Activated T-helper 2 cell treated with anti-CD3 and anti-CD28 coated beads, Interferon-gamma antibody, Interleukin-2, Interleukin-4, amounts not matched to agents 10 μg/mL and 5 μg/mL and 100 μg/mL, durations not matched to agents 14 hours and 24 hours and 36 hours (primary cell): ENCODE measurements at regions of chr22 and their contacts with region 1.

Region 1: DNA sequence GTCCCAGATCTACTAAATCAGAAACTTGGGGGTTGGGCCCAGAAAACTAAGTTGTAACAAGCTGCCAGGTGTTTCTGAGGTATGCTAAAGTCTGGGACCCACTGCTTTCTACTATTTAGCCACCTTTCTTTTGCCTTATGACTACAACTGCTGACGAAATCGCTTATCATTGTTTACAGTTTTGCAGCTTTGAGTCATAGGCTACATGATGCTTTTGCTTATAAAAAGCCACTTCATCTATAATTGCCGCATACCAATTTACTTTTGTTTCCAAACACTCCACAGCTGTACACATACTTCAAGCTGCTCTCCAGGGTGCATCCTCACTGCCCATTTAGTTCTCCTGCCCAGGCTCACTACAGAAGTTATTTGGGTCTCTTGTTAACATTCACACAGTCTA is 144.7 kb downstream of the ENTHD1 start:
- DNase-seq: no peak
- H3K4me3 Mint-ChIP-seq: no peak overlapping the region
- H3K27ac Mint-ChIP-seq: no peak overlapping the region
- H3K4me1 Mint-ChIP-seq: peaks cover 45% of the 10 kb centered on the region
- H3K27me3 Mint-ChIP-seq: peaks cover 12% of the 10 kb centered on the region

Region 2: GRCh38 chr22:39773976-39774539 is 25.2 kb after region 1 on chr22:
- intact Hi-C with region 1: loop called (anchors 2 kb)
- DNase-seq: peak; percentile 61
- H3K4me3 Mint-ChIP-seq: peak overlapping the region; percentile 18
- H3K27ac Mint-ChIP-seq: peak overlapping the region; percentile 46
- H3K4me1 Mint-ChIP-seq: peaks cover 56% of the 10 kb centered on the region
- H3K27me3 Mint-ChIP-seq: no peaks in the 10 kb centered on the region

Region 3: DNA sequence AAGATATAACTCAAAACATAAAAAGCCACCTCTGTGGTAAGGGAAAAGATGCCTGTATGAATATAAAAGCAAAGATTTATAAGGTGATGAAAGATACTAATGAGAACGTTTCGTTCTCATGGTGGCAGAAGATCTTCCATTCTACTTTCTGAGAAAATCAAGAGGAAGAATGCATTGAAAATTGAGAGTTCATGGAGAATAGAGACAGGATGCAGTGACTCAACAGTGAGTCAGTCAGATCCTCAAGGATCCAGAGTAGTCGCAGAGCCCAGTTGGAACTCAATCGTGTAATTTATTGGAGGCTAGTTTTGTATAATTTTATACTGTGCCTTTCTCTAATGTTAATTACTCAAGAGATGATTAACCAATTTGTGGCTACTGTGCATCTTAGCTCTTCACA is 71.4 kb after region 1 on chr22:
- intact Hi-C with region 1: loop called (anchors 10 kb)
- DNase-seq: no peak
- H3K4me3 Mint-ChIP-seq: no peak overlapping the region
- H3K27ac Mint-ChIP-seq: no peak overlapping the region
- H3K4me1 Mint-ChIP-seq: peaks cover 5% of the 10 kb centered on the region
- H3K27me3 Mint-ChIP-seq: peaks cover 58% of the 10 kb centered on the region

Region 4: DNA sequence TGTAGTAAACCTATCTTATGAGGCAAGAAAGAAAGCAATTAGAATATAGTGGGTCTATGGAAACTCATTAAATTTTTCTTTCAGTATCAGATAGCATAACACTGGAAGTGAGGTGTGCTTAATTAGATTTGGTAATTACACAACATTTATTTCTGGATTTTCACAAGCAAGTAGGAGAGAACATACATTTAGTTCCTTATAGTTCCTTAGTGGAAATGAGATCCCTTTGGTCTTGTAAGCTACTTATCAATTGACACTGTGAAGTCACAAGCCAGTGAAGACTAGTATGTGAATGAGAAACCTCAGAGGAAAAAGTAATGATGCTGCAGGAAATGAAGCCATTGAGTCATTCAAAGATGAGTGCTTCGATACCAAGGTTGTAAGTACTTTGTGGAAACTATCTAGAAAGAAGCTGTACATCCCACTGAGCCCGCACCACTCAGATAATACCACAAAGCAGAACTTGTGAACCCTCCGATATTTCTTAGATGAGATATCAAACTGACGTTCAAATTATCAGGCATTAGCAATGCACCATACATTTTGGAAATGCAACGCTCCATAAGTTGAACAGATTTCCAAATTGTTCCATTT is 91.1 kb after region 1 on chr22:
- intact Hi-C with region 1: loop called (anchors 5 kb)
- DNase-seq: peak; percentile 47
- H3K4me3 Mint-ChIP-seq: peak overlapping the region; percentile 6
- H3K27ac Mint-ChIP-seq: peak overlapping the region; percentile 59
- H3K4me1 Mint-ChIP-seq: peaks cover 22% of the 10 kb centered on the region
- H3K27me3 Mint-ChIP-seq: peaks cover 26% of the 10 kb centered on the region

Region 5: DNA sequence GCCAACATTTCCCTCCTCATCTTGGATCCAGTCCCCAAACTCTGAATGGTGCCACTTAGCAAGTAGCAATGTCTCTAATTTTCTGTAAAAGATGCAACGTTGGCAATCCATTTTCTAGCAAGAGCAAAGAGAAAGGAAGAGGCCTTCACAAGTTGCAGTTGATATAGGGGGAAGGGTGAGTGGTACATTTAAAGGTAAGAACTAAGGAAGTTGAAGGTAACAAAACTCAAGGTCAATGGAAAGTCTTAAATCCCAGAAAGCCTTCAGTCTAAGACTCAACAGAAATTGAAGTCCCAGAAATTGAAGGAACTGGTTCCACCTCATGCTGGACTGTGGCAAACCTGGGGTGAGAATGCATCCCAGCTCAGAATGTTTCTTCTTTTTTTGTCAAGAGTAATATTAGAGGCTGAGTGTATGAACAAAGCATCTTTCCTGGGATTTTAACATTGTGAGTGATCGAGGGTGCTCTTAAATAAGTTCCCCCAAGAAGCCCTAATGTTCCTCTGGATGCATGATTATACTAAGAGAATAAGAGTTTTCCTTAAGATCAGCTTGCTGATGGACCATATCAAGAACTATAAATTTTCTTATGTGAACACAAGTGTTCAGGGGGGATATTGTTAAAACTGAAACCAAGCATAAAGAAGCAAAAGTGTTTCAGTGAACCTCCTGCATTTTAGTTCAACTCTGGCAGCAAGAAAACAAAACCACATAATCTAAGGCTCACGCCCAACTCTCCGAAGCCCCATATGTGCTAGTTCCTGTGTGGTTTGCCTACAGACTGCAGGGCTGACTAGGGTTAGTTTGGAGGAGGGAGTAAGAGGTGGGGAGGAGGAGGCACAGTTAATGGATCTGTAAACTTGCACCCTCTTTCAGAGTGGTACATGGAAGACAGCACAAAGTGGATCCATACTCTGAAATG is 151.7 kb after region 1 on chr22 and contains the start of gene GRAP2:
- intact Hi-C with region 1: loop called (anchors 5 kb)
- DNase-seq: peak; percentile 78
- H3K4me3 Mint-ChIP-seq: peak within 1 kb of the TSS; percentile 98
- H3K27ac Mint-ChIP-seq: peak within 1 kb of the TSS; percentile 99
- H3K4me1 Mint-ChIP-seq: peaks cover 31% of the 10 kb centered on the region
- H3K27me3 Mint-ChIP-seq: no peaks in the 10 kb centered on the region
- total RNA-seq, gene GRAP2: 44.1 and 46.5 TPM in 2 replicates

Region 6: GRCh38 chr22:39954584-39955055 is 205.7 kb after region 1 on chr22:
- intact Hi-C with region 1: loop called (anchors 5 kb)
- DNase-seq: no peak
- H3K4me3 Mint-ChIP-seq: no peak overlapping the region
- H3K27ac Mint-ChIP-seq: no peak overlapping the region
- H3K4me1 Mint-ChIP-seq: peaks cover 84% of the 10 kb centered on the region
- H3K27me3 Mint-ChIP-seq: no peaks in the 10 kb centered on the region